Mammary epithelial cell (primary cell): ENCODE measurements at regions of chrX and their contacts with region 1.

Region 1: DNA sequence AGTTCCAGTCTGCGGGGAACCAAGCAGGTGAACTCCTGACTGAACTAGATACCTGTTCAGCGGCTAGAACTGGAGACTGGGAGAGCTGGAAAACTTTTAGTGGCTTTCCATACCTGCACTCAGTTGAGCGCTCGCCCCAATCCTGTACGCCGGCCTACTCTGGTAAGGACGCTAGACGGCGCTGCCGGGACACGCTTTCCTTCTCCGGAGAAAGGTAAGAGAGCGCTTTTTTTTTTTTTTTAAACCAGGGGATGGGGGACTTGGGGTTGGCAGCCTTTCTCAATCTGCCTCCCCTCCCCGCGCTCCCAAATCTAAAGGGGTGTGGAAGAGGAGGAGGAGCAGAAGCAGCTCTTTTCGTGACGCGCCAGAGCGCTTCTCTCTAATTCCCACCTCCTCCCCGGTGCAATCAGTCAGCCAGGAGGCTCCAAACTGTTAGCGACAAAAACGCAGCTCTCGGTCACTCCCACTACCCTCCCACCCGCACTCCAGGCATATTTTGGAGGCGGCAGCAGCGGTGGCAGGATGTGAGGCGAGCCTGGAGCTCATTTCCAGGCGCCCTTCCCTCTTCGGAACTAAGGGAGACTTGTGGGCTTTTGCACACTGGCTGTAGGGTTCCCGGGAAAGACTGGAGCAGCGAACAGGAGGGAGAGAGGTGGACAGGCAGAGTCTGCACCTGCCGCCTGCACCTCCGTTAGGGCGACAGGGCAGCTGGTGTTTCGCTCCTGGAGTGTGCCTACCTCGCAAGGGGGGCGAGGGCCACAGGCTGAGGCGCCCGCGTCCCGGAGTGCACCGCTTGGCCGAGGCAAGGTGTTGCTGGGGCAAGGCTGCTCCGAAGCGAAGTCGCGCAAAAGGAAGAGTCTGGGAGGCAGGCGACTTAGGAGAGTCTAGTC is at the start of gene IL1RAPL2:
- DNase-seq: peak; percentile 58
- H3K4me3 ChIP-seq: peak within 1 kb of the TSS; percentile 46 to 55 (median 53)
- H3K27ac ChIP-seq: no peak within 1 kb of the TSS
- H3K4me1 ChIP-seq: peaks cover 3% of the 10 kb centered on the region
- H3K27me3 ChIP-seq: peaks cover 4% of the 10 kb centered on the region
- CTCF ChIP-seq: peak; percentile 64 to 84
- total RNA-seq, gene IL1RAPL2: 0.19 to 0.50 TPM

Region 2: DNA sequence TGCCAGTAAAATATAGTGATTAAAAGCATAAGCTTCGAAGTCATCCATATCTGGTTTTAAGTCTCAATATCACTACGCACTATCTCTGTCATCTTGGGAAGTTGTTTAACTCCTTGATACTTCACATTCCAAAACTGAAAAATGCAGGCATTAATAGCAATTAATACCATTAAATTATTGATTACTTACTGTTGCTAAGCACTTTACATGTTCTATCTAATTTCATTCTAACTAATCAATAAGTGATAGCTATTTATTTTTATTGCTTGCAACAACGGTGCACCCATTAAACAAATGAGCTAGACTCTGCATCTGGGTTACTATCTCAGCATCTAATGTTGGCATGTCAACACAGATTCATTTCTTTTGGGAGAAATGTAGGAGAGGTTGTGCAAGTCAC is 67.7 kb before region 1 on chrX:
- CTCF ChIA-PET with region 1: no interaction called
- dilution Hi-C with region 1: no loop called
- in situ Hi-C with region 1: no loop called
- intact Hi-C with region 1: no loop called
- DNase-seq: no peak
- H3K4me3 ChIP-seq: no peak overlapping the region
- H3K27ac ChIP-seq: no peak overlapping the region
- H3K4me1 ChIP-seq: no peaks in the 10 kb centered on the region
- H3K27me3 ChIP-seq: no peaks in the 10 kb centered on the region
- CTCF ChIP-seq: no peak

Region 3: GRCh38 chrX:104668550-104668949 is 102.5 kb after region 1 on chrX:
- CTCF ChIA-PET with region 1: no interaction called
- dilution Hi-C with region 1: no loop called
- in situ Hi-C with region 1: no loop called
- intact Hi-C with region 1: loop called (anchors 10 kb)
- DNase-seq: peak; percentile 14
- H3K4me3 ChIP-seq: no peak overlapping the region
- H3K27ac ChIP-seq: no peak overlapping the region
- H3K4me1 ChIP-seq: no peaks in the 10 kb centered on the region
- H3K27me3 ChIP-seq: peaks cover 3% of the 10 kb centered on the region
- CTCF ChIP-seq: peak in 1 of 2 donors; percentile 42

Region 4: GRCh38 chrX:104721854-104722253 is 155.8 kb after region 1 on chrX:
- CTCF ChIA-PET with region 1: no interaction called
- dilution Hi-C with region 1: no loop called
- in situ Hi-C with region 1: no loop called
- intact Hi-C with region 1: no loop called
- DNase-seq: no peak
- H3K4me3 ChIP-seq: no peak overlapping the region
- H3K27ac ChIP-seq: no peak overlapping the region
- H3K4me1 ChIP-seq: no peaks in the 10 kb centered on the region
- H3K27me3 ChIP-seq: no peaks in the 10 kb centered on the region
- CTCF ChIP-seq: no peak